Right cardiac atrium (tissue), 5 donors: ENCODE measurements at regions of chr11 and their contacts with region 1.

Region 1: DNA sequence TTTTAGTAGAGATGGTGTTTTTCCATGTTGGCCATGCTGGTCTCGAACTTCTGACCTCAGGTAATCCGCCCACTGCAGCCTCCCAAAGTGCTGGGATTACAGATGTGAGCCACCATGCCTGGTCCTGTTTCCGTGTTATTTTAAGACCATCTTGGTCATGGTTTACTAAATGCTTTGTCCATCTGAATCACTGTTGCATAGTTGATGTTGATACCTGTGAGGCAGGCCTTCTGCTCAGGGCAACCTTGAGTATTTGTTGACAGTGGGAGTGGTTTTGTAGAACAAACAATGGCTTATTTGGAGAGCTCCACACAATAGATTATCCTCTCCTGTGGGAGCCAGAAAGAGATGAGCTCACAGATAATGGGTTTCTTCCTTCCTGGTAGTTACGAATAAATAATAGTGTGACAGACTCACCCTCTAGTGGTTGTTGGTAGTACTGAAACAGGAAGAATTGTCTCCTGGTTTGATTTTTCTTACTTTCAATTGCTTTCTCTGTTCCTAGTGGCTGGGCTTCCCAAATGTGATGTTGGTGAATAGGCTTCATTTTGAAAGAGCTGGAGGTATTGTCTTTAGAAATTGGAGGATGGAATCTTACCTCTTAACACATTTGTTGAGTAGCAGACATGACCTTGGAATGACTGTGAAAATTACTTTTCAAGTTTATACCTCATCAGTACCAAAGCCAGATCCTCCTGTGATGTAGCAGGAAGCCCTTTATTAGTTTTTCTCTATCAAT is 39.0 kb downstream of the CTNND1 start:
- DNase-seq: no peak
- ATAC-seq: peak; percentile 67 to 74
- H3K4me3 ChIP-seq: no peak overlapping the region
- H3K27ac ChIP-seq: peak overlapping the region; percentile 70
- H3K4me1 ChIP-seq: peaks cover 6% of the 10 kb centered on the region
- H3K27me3 ChIP-seq: no peaks in the 10 kb centered on the region

Region 2: GRCh38 chr11:57729479-57729878 is 71.1 kb before region 1 on chr11:
- intact Hi-C with region 1: no loop called
- DNase-seq: no peak
- ATAC-seq: no peak
- H3K4me3 ChIP-seq: no peak overlapping the region
- H3K27ac ChIP-seq: no peak overlapping the region
- H3K4me1 ChIP-seq: no peaks in the 10 kb centered on the region
- H3K27me3 ChIP-seq: no peaks in the 10 kb centered on the region

Region 3: DNA sequence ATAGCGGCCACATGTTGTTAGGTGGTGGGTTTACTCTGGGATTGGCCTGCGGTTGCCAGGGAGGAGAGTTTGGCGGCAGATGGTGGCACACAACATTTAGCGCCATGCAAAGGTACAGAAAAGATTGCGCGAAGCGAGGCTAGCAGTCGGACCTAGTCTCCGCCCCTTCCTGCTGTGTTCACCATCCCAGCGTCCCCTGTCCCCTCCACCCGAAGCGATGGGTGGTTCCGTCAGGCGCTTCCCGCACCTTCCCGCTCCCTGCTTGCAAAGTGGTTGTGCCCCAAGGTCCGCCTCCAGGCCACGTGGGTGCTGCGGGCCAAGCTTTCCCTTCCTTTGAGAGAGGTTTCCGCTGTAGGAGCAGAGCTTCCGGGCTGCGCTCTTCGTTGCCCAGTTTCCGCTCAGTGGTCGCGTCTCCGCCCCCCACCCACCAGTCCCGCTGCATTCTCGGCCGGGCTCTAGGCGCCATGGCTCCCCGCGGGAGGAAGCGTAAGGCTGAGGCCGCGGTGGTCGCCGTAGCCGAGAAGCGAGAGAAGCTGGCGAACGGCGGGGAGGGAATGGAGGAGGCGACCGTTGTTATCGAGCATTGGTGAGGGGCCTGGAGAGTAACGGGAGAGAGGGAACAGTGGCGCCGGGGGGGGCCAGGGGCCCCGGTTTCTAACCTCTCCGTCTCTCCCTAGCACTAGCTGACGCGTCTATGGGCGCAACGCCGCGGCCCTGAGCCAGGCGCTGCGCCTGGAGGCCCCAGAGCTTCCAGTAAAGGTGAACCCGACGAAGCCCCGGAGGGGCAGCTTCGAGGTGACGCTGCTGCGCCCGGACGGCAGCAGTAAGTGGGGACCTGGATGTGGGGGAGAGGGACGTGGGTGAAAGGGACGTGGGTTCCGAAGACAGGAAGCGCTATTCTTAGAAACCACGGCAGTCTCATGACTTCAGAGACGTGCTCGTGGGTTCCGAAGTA is 59.2 kb before region 1 on chr11 and contains the start of gene SELENOH:
- intact Hi-C with region 1: loop called in 2 of 4 experiments (anchors 10 kb)
- DNase-seq: peak; percentile 97 to 98 (median 98)
- ATAC-seq: peak; percentile 98 to 99
- H3K4me3 ChIP-seq: peak within 1 kb of the TSS; percentile 65
- H3K27ac ChIP-seq: peak within 1 kb of the TSS; percentile 85
- H3K4me1 ChIP-seq: peaks cover 1% of the 10 kb centered on the region
- H3K27me3 ChIP-seq: no peaks in the 10 kb centered on the region
- total RNA-seq, gene SELENOH: 91.3 to 110 (median 99.1) TPM

Region 4: GRCh38 chr11:57751676-57752253 is 48.8 kb before region 1 on chr11 and contains the start of gene BTBD18:
- intact Hi-C with region 1: loop called (anchors 5 to 10 kb)
- DNase-seq: peak in 2 of 3 donors; percentile 27 to 41
- ATAC-seq: peak; percentile 84
- H3K4me3 ChIP-seq: no peak within 1 kb of the TSS
- H3K27ac ChIP-seq: peak within 1 kb of the TSS; percentile 30
- H3K4me1 ChIP-seq: peaks cover 4% of the 10 kb centered on the region
- H3K27me3 ChIP-seq: no peaks in the 10 kb centered on the region
- total RNA-seq, gene BTBD18: not detected

Region 5: DNA sequence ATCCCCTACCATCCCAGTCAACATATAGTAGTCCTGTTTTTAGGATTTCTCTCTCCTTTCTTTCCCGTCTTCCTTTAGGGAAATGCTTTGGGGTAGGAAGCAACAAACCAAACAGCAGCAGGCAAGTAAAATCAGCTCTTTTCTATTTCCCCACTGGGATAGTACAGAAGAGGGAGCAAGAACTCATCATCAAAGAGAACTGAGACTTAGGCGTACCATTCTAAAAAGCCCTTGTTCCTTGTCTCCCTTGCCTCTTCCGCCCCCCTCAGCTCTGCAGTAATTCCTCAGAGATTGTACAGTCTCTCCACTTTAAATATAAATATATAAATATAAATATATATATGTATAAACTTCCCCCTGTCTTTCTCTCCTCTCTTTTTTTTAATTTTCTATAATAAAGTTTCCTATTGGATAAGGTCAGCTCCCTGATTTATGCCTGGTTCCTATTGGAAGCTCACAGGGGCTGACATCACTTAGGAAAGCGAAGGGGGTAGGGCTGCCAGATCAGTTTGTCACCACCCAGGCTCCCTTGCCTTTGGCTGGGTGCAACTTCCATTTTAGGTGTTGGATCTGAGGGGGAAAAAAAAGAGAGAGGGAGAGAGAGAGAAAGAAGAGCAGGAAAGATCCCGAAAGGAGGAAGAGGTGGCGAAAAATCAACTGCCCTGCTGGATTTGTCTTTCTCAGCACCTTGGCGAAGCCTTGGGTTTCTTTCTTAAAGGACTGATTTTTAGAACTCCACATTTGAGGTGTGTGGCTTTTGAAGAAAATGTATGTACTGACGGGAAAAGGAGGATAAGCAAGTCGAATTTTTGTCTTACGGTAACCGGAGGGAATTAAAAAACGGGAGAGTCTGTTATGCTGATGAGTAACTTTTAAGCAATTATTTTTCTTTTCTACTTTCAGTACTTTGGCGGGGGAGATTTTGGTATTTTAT is 39.0 kb before region 1 on chr11 and contains the start of gene CTNND1:
- intact Hi-C with region 1: loop called in 3 of 4 experiments (anchors 5 kb)
- DNase-seq: peak; percentile 87 to 92 (median 90)
- ATAC-seq: peak; percentile 99
- H3K4me3 ChIP-seq: peak within 1 kb of the TSS; percentile 100
- H3K27ac ChIP-seq: peak within 1 kb of the TSS; percentile 100
- H3K4me1 ChIP-seq: peaks cover 2% of the 10 kb centered on the region
- H3K27me3 ChIP-seq: no peaks in the 10 kb centered on the region
- total RNA-seq, gene CTNND1: 66.6 to 98.6 (median 77.5) TPM